ENCODE measurements at regions of chr15 and their contacts with region 1.

Region 1: DNA sequence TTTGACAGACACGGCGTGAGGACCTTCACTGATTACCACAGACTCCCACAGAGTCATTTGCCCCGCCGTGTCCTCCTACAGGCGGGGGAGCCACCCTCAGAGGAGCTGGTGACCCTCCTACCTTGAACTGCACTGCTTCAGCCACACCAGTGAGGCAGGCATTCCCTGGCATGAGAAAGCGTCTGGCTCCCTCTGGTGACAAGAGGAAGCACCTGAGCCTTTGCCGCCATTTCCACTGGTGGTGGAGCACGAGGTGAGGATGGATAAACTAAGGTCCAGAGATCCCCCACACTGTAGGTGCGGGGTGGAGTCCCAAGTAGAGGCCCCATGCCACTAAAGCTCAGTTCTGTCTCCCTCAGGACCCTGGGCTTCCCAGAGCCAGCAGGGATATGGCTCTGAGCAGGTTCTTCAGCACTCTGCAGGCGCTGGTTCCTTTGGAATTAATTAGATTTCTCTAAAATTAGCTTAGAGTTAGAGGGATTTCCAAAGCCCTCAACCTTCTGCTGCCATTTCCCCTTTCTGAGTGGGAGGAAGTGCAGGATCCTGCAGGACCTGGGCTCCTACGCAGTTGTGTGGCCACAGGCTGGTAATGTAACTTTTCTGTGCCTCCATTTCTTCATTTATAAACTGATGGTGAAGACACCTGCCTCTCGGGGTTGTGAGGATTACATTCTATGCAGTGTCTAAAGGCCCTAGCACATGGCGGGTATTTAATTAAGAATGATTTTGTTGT is 224.0 kb downstream of the SLCO3A1 start:
- H3K4me3 Mint-ChIP-seq: no peak overlapping the region
- H3K27ac Mint-ChIP-seq: peak overlapping the region; percentile 32
- H3K4me1 Mint-ChIP-seq: peaks cover 81% of the 10 kb centered on the region
- H3K27me3 Mint-ChIP-seq: no peaks in the 10 kb centered on the region

Region 2: DNA sequence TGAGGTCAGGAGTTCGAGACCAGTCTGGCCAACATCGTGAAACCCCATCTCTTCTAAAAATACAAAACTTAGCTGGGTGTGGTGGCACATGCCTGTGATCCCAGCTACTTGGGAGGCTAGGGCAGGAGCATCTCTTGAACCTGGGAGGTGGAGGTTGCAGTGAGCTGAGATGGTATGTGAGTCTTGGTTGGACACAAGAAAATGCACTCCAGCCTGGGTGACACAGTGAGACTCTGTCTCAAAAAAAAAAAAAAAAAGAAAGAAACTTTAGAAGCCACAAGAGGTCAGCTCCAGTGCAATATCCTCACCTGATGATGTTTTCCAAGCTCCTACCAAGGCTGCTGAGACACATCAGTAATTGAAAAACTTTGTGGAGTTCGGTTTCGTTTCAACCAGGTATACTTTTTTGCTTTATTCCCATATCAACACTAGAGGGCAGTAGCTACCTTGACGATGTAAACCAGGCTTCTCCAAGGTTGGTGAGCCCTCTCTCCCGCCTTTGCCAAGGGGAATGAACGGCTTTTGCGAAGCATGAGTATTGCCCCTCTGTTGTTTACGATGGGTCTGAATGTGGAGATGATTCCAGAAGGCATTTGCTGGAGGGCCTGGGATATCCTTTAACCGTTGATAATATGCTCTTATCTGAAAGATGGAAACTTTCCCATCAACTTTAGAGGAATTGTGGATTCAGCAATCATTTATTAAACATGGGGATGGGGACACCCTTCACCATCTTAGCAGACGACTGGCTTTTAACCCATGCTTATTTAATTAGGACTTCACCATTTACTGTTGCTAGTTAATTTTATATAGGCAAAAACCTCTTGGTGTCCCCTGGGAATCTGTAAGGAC is 774.7 kb before region 1 on chr15:
- intact Hi-C with region 1: loop called (anchors 2 kb)
- H3K4me3 Mint-ChIP-seq: no peak overlapping the region
- H3K27ac Mint-ChIP-seq: no peak overlapping the region
- H3K4me1 Mint-ChIP-seq: peaks cover 9% of the 10 kb centered on the region
- H3K27me3 Mint-ChIP-seq: peaks cover 17% of the 10 kb centered on the region

Region 3: GRCh38 chr15:91852741-91853510 is 224.6 kb before region 1 on chr15:
- intact Hi-C with region 1: loop called (anchors 5 kb)
- H3K4me3 Mint-ChIP-seq: peak overlapping the region; percentile 89
- H3K27ac Mint-ChIP-seq: peak overlapping the region; percentile 97
- H3K4me1 Mint-ChIP-seq: peaks cover 58% of the 10 kb centered on the region
- H3K27me3 Mint-ChIP-seq: peaks cover 1% of the 10 kb centered on the region

Region 4: DNA sequence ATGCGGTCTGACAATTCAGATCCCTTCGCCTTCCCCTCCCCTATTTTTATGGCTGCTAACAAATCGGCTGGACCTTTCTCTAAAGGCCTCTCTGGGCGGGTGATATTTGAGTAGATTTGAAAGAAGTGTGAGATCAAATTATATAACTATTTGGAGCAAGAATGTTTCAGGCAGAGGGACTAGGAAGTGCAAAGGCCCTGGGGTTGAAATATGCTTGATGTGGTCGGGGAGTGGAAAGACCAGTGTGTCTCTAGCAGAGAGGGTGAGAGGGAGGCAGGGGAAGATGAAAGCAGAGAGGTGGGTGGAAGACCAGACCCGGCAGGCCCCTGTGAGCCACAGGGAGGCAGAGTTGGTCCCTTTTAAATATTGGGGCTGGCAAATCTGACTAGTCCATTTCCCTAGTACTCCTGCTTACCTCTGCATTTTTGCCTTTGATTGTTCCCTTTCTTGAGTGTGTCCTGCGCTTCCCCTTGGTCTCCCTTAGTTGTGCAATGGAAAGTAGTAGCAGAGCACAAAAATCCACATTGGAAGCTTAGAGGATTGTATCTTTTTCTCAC is 191.7 kb before region 1 on chr15:
- intact Hi-C with region 1: loop called (anchors 1 kb)
- H3K4me3 Mint-ChIP-seq: no peak overlapping the region
- H3K27ac Mint-ChIP-seq: peak overlapping the region; percentile 78
- H3K4me1 Mint-ChIP-seq: peaks cover 76% of the 10 kb centered on the region
- H3K27me3 Mint-ChIP-seq: no peaks in the 10 kb centered on the region

Region 5: DNA sequence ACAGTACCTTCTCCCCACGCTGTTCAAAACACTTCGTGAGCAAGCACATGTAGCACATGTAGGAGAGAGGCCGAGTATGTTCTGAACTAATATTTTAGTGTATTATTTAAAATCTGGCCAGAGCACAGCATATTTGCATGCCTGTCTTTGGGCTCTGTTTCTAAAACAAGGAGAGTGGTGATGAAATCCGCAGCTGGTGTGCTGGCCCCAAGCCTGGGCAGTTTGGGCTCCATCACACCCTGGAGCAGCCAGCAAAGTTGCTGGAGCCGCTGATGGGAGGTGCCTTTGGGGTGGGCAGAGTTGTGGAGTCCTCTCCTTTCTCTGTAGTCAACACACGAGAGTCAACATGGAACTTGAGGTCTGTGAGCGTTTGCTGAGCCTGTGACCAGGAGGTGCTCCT is 107.4 kb before region 1 on chr15:
- intact Hi-C with region 1: loop called (anchors 10 kb)
- H3K4me3 Mint-ChIP-seq: no peak overlapping the region
- H3K27ac Mint-ChIP-seq: peak overlapping the region; percentile 7
- H3K4me1 Mint-ChIP-seq: peaks cover 79% of the 10 kb centered on the region
- H3K27me3 Mint-ChIP-seq: no peaks in the 10 kb centered on the region

Region 6: DNA sequence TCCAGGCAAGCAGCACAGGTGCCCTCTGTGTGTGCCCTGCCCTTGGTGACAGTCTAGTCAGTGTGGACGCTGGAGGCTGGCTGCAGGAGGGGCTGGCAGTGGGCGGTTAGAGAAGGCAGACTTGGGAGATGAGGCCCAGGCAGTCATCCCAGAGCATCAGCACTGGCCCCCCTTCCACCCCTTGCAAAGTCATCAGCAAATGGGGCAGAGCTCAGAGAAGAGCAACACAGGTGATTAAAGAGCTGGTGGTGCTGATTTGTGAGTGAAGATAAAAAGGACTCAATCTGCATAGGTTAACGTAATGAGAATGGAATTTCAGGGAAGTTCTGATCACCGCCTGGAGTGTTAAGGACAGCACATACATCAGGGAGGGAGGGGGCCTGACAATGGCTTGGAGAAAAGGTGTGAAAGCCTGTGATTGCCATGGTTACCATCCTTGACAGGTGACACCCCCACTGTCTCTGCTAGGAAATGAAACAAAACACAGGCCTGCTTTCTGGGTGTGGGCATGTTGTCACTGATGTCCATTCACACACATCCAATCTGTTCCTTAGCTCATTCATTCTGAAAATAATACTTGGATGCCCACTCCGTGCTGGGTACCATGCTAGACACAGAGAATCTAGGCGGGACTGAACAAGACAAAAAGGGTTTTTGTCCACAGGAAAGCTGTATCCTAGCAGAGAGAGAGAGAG is 46.6 kb after region 1 on chr15:
- intact Hi-C with region 1: no loop called
- H3K4me3 Mint-ChIP-seq: no peak overlapping the region
- H3K27ac Mint-ChIP-seq: no peak overlapping the region
- H3K4me1 Mint-ChIP-seq: no peaks in the 10 kb centered on the region
- H3K27me3 Mint-ChIP-seq: no peaks in the 10 kb centered on the region

Measured in dendritic cell treated with granulocyte-macrophage colony-stimulating factor and Interleukin-4, amounts not matched to agents 40 ng/mL and 50 ng/mL, for 4 days (primary cell).